Heart left ventricle (tissue), 16 donors: ENCODE measurements at regions of chr1 and their contacts with region 1.

Region 1: DNA sequence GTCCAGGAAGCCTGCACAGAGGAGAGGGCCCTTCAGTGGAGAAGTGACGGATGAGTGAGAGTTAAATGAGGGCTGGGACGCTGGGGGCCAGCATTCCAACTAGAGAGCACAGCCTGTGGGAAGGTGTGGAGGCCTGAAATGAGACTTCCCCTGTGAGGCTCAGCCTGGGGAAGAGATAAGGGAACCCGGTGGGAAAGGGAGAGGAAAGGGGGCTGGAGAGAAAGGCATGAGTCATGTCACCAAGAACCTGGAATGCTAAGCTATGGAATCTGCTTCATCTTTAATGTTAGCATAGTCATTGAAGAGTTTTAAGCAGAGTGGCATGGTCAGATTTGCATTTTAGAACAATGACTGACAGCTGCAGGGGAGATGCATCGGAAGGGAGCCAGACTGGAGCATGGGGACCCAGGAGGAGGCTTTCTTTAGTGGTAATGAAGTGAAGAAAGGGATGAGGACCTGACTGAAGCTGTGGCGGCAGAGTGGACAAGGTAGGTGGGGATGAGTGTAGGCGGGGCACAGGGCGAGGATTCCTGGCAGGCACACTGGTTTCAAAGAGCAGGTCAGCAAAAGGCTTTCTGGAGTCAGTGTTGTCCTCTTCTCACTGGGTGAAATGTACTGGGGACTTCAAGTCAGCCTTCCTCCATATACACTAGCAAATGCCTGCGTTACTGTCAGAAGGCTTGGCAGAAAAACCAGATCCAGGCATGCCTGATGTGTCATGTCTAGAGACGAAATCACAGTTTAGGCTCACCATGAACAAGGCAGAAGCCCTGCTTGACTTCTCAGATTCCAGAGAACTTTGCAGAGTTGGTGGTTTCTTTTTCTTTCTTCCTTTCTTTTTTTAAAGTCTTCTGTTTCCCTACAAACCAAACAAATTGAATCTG is 8.0 kb downstream of the RGL1 start:
- DNase-seq: no peak
- ATAC-seq: peak in 3 of 4 donors; percentile 25 to 75 (median 57)
- H3K4me3 ChIP-seq: peak overlapping the region in 3 of 12 donors; percentile 11 to 33 (median 12)
- H3K27ac ChIP-seq: peak overlapping the region in 4 of 12 donors; percentile 6 to 36 (median 14)
- H3K4me1 ChIP-seq: peaks cover 3 to 99% (median 65%) of the 10 kb centered on the region in 12 donors
- H3K27me3 ChIP-seq: no peaks in the 10 kb centered on the region
- CTCF ChIP-seq: no peak
- POLR2A ChIP-seq: no peak

Region 2: GRCh38 chr1:183871142-183871541 is 58.2 kb after region 1 on chr1:
- intact Hi-C with region 1: loop called in 4 of 10 experiments (anchors 5 to 10 kb)
- DNase-seq: no peak
- ATAC-seq: peak in 2 of 4 donors; percentile 33 to 70
- H3K4me3 ChIP-seq: no peak overlapping the region
- H3K27ac ChIP-seq: peak overlapping the region in 11 of 12 donors; percentile 56 to 84 (median 81)
- H3K4me1 ChIP-seq: peaks cover 10 to 80% (median 54%) of the 10 kb centered on the region in 12 donors
- H3K27me3 ChIP-seq: no peaks in the 10 kb centered on the region
- CTCF ChIP-seq: no peak
- POLR2A ChIP-seq: no peak

Region 3: GRCh38 chr1:183881387-183882131 is 68.6 kb after region 1 on chr1:
- intact Hi-C with region 1: loop called in 4 of 10 experiments (anchors 5 to 10 kb)
- DNase-seq: peak; percentile 65 to 76 (median 69)
- ATAC-seq: peak; percentile 44 to 90 (median 78)
- H3K4me3 ChIP-seq: no peak overlapping the region
- H3K27ac ChIP-seq: peak overlapping the region in 11 of 12 donors; percentile 5 to 80 (median 41)
- H3K4me1 ChIP-seq: peaks cover 9 to 93% (median 47%) of the 10 kb centered on the region in 12 donors
- H3K27me3 ChIP-seq: no peaks in the 10 kb centered on the region
- CTCF ChIP-seq: no peak
- POLR2A ChIP-seq: no peak

Region 4: GRCh38 chr1:183915625-183916510 is 102.9 kb after region 1 on chr1:
- intact Hi-C with region 1: loop called in 2 of 10 experiments (anchors 5 to 10 kb)
- DNase-seq: peak in 4 of 5 donors; percentile 76 to 81 (median 78)
- ATAC-seq: peak; percentile 22 to 85 (median 84)
- H3K4me3 ChIP-seq: no peak overlapping the region
- H3K27ac ChIP-seq: peak overlapping the region in 7 of 12 donors; percentile 31 to 70 (median 44)
- H3K4me1 ChIP-seq: peaks cover 0 to 50% (median 18%) of the 10 kb centered on the region in 12 donors
- H3K27me3 ChIP-seq: no peaks in the 10 kb centered on the region
- CTCF ChIP-seq: peak; percentile 73 to 93 (median 86)
- POLR2A ChIP-seq: no peak